HepG2 (cell line): ENCODE measurements at regions of chr14 and their contacts with region 1.

Region 1: GRCh38 chr14:64986578-64987571 is at the start of gene FNTB:
- DNase-seq: peak; percentile 92
- ATAC-seq: peak; percentile 99
- H3K4me3 ChIP-seq: peak within 1 kb of the TSS; percentile 63 to 86 (median 83)
- H3K27ac ChIP-seq: peak within 1 kb of the TSS; percentile 88
- H3K4me1 ChIP-seq: peaks cover 55% of the 10 kb centered on the region
- H3K27me3 ChIP-seq: no peaks in the 10 kb centered on the region
- CTCF ChIP-seq: peak; percentile 96
- EP300 ChIP-seq: peak in 1 of 2 experiments; percentile 30; a peak in 1 of 4 replicates
- POLR2A ChIP-seq: peak; percentile 80 to 86
- RAD21 ChIP-seq: peak; percentile 71
- total RNA-seq, gene FNTB: 28.5 and 35.1 TPM in 2 replicates

Region 2: GRCh38 chr14:64823305-64823861 is 163.5 kb before region 1 on chr14:
- CTCF ChIA-PET with region 1: interaction called, 7 read pairs
- POLR2A ChIA-PET with region 1: no interaction called
- in situ Hi-C with region 1: loop called (anchors 10 kb)
- intact Hi-C with region 1: no loop called
- DNase-seq: peak; percentile 40
- ATAC-seq: peak; percentile 97
- H3K4me3 ChIP-seq: peak overlapping the region in 1 of 3 experiments; percentile 33; a peak in 1 of 6 replicates
- H3K27ac ChIP-seq: no peak overlapping the region
- H3K4me1 ChIP-seq: peaks cover 16% of the 10 kb centered on the region
- H3K27me3 ChIP-seq: peaks cover 17 to 84% of the 10 kb centered on the region in 2 experiments
- CTCF ChIP-seq: peak; percentile 94
- EP300 ChIP-seq: no peak
- POLR2A ChIP-seq: no peak
- RAD21 ChIP-seq: peak; percentile 82

Region 3: GRCh38 chr14:64937821-64938193 is 49.1 kb before region 1 on chr14:
- CTCF ChIA-PET with region 1: interaction called, 3 read pairs
- POLR2A ChIA-PET with region 1: interaction called, 54 read pairs
- in situ Hi-C with region 1: no loop called
- intact Hi-C with region 1: loop called (anchors 1 kb)
- DNase-seq: peak; percentile 63
- ATAC-seq: peak; percentile 18
- H3K4me3 ChIP-seq: no peak overlapping the region
- H3K27ac ChIP-seq: peak overlapping the region; percentile 0
- H3K4me1 ChIP-seq: peaks cover 63% of the 10 kb centered on the region
- H3K27me3 ChIP-seq: no peaks in the 10 kb centered on the region; a peak in 1 of 5 replicates
- CTCF ChIP-seq: peak; percentile 73
- EP300 ChIP-seq: no peak
- POLR2A ChIP-seq: 0 out of 4 replicates have a peak, but pooled peaks of 1 of the 2 experiments have one; percentile 34
- RAD21 ChIP-seq: peak; percentile 34; the same call in 1 of the 2 replicates

Region 4: DNA sequence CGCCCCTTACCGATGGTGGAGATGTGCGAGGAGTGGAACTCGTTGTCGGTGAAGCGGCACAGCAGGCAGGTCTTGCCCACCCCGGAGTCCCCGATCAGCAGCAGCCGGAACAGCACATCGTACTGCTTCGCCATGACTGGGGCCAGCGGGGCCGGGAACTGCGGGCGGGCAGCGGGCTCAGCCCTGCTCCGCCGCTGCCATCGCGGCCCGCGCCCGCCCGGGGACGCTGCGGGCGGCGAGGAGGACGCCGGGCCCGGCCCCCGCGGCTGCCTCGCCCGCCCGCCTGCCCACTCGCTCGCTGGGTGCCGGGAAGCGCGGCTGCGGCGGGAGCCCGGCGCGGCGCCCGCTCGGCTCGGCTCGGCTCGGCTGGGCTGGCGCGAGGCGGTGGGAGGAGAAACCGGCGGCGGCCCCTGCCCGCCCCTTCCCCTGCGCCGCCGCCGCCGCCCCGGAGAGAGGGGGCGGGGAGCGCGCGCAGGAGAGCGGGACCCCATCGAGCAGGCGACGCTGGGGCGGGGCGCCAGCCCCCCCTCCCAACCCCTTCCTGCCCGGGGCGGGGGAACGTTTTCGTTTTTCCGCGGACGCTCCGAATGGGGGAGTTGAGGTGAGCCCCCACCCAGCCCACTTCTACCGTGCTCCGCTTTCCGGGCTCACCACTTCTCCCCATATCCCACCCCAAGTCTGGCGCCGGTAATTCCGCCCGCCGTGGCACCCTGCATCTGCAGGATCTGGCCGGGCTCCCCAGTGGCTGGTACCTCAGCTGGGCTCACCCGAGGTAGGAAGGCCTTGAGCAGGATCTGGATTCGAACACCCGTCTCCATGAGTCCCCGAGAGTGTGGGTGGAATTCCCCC is 14.7 kb before region 1 on chr14 and contains the start of gene RAB15:
- CTCF ChIA-PET with region 1: no interaction called
- POLR2A ChIA-PET with region 1: interaction called, 13 read pairs
- in situ Hi-C with region 1: no loop called
- intact Hi-C with region 1: no loop called
- DNase-seq: no peak
- ATAC-seq: peak; percentile 66
- H3K4me3 ChIP-seq: peak within 1 kb of the TSS; percentile 74 to 81 (median 79)
- H3K27ac ChIP-seq: no peak within 1 kb of the TSS
- H3K4me1 ChIP-seq: peaks cover 38% of the 10 kb centered on the region
- H3K27me3 ChIP-seq: no peaks in the 10 kb centered on the region; a peak in 1 of 5 replicates
- CTCF ChIP-seq: no peak
- EP300 ChIP-seq: no peak
- POLR2A ChIP-seq: no peak
- RAD21 ChIP-seq: no peak
- total RNA-seq, gene RAB15: 17.2 and 18.5 TPM in 2 replicates

Region 5: GRCh38 chr14:65019944-65020566 is 33.2 kb after region 1 on chr14:
- CTCF ChIA-PET with region 1: interaction called, 12 read pairs
- POLR2A ChIA-PET with region 1: interaction called, 19 read pairs
- in situ Hi-C with region 1: no loop called
- intact Hi-C with region 1: loop called (anchors 1 kb)
- DNase-seq: peak; percentile 85
- ATAC-seq: peak; percentile 99
- H3K4me3 ChIP-seq: no peak overlapping the region
- H3K27ac ChIP-seq: no peak overlapping the region
- H3K4me1 ChIP-seq: peaks cover 9% of the 10 kb centered on the region; the same call in 1 of the 2 replicates
- H3K27me3 ChIP-seq: no peaks in the 10 kb centered on the region
- CTCF ChIP-seq: peak; percentile 73
- EP300 ChIP-seq: no peak
- POLR2A ChIP-seq: no peak
- RAD21 ChIP-seq: peak; percentile 51